Mucosa of descending colon (tissue), 3 donors: ENCODE measurements at regions of chr17 and their contacts with region 1.

Region 1: GRCh38 chr17:12667299-12667958 is 1.7 kb downstream of the MYOCD start:
- DNase-seq: peak in 1 of 3 donors; percentile 49
- ATAC-seq: peak; percentile 64
- H3K4me3 ChIP-seq: no peak overlapping the region
- H3K4me1 ChIP-seq: peaks cover 7% of the 10 kb centered on the region
- CTCF ChIP-seq: no peak

Region 2: GRCh38 chr17:12256380-12256995 is 410.9 kb before region 1 on chr17:
- intact Hi-C with region 1: loop called (anchors 5 kb)
- DNase-seq: peak in 1 of 3 donors; percentile 53
- ATAC-seq: peak; percentile 34
- H3K4me3 ChIP-seq: no peak overlapping the region
- H3K4me1 ChIP-seq: no peaks in the 10 kb centered on the region
- CTCF ChIP-seq: peak; percentile 41

Region 3: GRCh38 chr17:12421646-12422306 is 245.7 kb before region 1 on chr17:
- intact Hi-C with region 1: loop called in 1 of 2 experiments (anchors 10 kb)
- DNase-seq: no peak
- ATAC-seq: no peak
- H3K4me3 ChIP-seq: no peak overlapping the region
- H3K4me1 ChIP-seq: no peaks in the 10 kb centered on the region
- CTCF ChIP-seq: no peak

Region 4: DNA sequence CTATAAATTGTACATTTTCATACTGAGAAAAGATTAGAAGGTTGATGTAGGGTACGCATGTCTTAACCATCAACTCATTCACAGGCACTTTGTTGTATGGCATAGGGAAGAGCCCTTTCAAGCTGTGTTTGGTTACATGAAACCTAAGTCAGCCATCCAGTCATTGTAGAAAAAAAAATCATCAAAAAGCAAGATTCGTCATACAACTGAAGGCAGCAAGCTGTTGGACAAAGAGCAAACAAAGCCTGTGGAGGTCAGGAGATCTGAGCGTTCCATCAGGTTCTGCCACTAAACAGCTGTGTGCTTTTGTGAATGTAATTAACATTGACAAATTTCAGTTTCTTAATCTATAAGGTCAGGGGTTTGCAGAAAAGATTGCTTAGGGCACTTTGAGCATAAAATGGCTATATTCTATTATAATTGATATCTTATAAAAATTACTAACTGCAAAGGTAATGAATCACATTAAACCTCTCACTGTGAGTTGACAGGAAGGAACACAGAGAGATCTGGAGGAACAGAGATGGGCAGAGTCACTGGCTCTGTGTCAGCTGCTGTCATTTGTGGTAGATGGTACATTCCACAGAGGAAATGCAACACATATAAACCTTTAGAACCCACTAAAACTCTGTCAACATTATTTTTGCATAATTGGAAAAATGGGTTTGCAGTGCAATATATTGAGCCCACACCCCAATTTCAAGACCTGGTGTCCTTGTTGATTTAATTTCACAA is 68.1 kb before region 1 on chr17:
- intact Hi-C with region 1: no loop called
- DNase-seq: peak in 1 of 3 donors; percentile 17
- ATAC-seq: peak; percentile 72
- H3K4me3 ChIP-seq: no peak overlapping the region
- H3K4me1 ChIP-seq: peaks cover 3% of the 10 kb centered on the region
- CTCF ChIP-seq: no peak